ENCODE measurements at regions of chr11 and their contacts with region 1.

Region 1: GRCh38 chr11:61332797-61333549 is at the starts of genes DDB1 and TKFC:
- DNase-seq: peak; percentile 98
- ATAC-seq: peak; percentile 94
- H3K4me3 Mint-ChIP-seq: peak within 1 kb of the TSS; percentile 86
- H3K27ac Mint-ChIP-seq: peak within 1 kb of the TSS; percentile 96
- H3K4me1 Mint-ChIP-seq: peaks cover 66% of the 10 kb centered on the region
- H3K27me3 Mint-ChIP-seq: no peaks in the 10 kb centered on the region
- CTCF ChIP-seq: no peak
- total RNA-seq, gene DDB1: 269 to 270 TPM
- total RNA-seq, gene TKFC: 79.1 to 86.3 TPM

Region 2: DNA sequence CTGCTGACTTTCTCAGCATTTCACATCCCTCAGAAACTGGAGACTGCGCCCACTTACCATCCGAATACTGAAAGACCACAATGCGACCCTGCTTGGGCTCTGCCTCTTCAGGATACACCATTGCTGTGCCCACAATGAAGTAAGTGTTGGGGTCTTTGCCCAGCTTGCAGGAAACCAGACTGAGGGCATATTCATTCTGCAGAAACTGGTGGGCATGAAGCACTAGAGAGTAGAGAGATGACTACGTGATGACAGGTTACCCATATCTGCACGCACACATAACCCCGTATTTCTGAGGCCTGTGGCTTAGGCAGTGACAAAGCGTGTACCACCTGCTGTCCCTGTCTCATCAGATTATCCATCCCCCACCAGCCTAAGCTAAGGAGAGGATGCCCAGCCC is 23.2 kb before region 1 on chr11:
- CTCF ChIA-PET with region 1: interaction called, 10 read pairs
- POLR2A ChIA-PET with region 1: interaction called, 7 read pairs
- intact Hi-C with region 1: no loop called
- DNase-seq: peak; percentile 28
- ATAC-seq: peak; percentile 83
- H3K4me3 Mint-ChIP-seq: no peak overlapping the region
- H3K27ac Mint-ChIP-seq: peak overlapping the region; percentile 19
- H3K4me1 Mint-ChIP-seq: no peaks in the 10 kb centered on the region
- H3K27me3 Mint-ChIP-seq: no peaks in the 10 kb centered on the region
- CTCF ChIP-seq: no peak

Region 3: DNA sequence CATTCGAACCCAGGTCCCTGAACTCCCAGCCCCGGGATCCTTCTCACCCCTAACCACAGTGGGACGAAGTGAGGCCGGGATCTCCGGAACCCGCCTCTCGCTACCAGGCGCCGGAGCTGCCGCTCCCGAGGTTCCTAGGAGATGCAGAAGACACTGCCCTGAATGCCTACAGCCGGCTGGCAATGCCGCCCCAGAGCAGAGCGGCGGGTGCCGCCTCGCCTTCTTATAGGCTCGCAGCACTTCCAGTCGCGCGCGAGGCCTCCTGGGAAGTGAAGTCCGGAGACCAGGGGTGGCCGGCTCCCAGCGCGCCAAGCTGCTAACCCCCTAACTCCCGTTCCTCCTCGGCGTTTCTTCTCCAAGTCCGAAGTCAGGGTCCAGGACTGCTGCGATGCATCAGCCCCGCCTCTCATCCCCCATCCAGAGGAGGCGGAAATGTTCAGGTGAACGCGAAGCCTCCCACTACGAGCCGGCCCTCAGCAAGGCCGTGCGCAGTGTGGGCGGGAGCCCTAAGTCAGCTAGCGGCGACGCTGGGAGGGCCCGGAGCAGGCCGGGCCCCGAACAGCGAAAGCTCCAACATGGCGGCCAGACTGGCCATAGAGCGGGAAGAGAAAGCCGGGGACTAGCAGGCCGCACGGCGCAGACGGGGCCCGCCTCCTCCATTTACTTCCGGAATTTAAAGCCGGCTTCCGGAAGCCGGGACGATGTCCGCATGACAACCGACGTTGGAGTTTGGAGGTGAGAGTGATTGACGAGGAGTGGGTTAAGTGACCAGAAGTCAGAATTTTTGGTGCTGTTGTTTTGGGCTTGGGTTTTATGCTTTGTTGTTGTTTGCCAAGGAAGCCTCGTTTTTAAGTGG is 28.9 kb after region 1 on chr11 and contains the starts of genes CYB561A3 and TMEM138:
- CTCF ChIA-PET with region 1: interaction called, 181 read pairs
- POLR2A ChIA-PET with region 1: interaction called, 59 read pairs
- intact Hi-C with region 1: loop called (anchors 2 kb)
- DNase-seq: peak; percentile 96
- ATAC-seq: peak; percentile 96
- H3K4me3 Mint-ChIP-seq: peak within 1 kb of the TSS; percentile 99
- H3K27ac Mint-ChIP-seq: peak within 1 kb of the TSS; percentile 99
- H3K4me1 Mint-ChIP-seq: peaks cover 35% of the 10 kb centered on the region
- H3K27me3 Mint-ChIP-seq: no peaks in the 10 kb centered on the region
- CTCF ChIP-seq: no peak
- total RNA-seq, gene CYB561A3: 32.4 to 33.5 TPM
- total RNA-seq, gene TMEM138: 38.6 to 47.0 TPM

Region 4: GRCh38 chr11:61392981-61393595 is 60.1 kb after region 1 on chr11:
- CTCF ChIA-PET with region 1: interaction called, 101 read pairs
- POLR2A ChIA-PET with region 1: interaction called, 24 read pairs
- intact Hi-C with region 1: no loop called
- DNase-seq: peak; percentile 35
- ATAC-seq: peak; percentile 41
- H3K4me3 Mint-ChIP-seq: peak overlapping the region; percentile 80
- H3K27ac Mint-ChIP-seq: peak overlapping the region; percentile 88
- H3K4me1 Mint-ChIP-seq: peaks cover 24% of the 10 kb centered on the region
- H3K27me3 Mint-ChIP-seq: no peaks in the 10 kb centered on the region
- CTCF ChIP-seq: peak; percentile 28

Region 5: GRCh38 chr11:61429691-61430582 is 97.0 kb after region 1 on chr11 and contains the starts of genes CPSF7 and SDHAF2:
- CTCF ChIA-PET with region 1: interaction called, 54 read pairs
- POLR2A ChIA-PET with region 1: interaction called, 17 read pairs
- intact Hi-C with region 1: no loop called
- DNase-seq: peak; percentile 98
- ATAC-seq: peak; percentile 91
- H3K4me3 Mint-ChIP-seq: peak within 1 kb of the TSS; percentile 98
- H3K27ac Mint-ChIP-seq: peak within 1 kb of the TSS; percentile 99
- H3K4me1 Mint-ChIP-seq: peaks cover 57% of the 10 kb centered on the region
- H3K27me3 Mint-ChIP-seq: no peaks in the 10 kb centered on the region
- CTCF ChIP-seq: no peak
- total RNA-seq, gene CPSF7: 98.5 to 105 TPM
- total RNA-seq, gene SDHAF2: 33.6 to 35.3 TPM

Region 6: GRCh38 chr11:61446211-61446651 is 113.3 kb after region 1 on chr11:
- CTCF ChIA-PET with region 1: interaction called, 16 read pairs
- POLR2A ChIA-PET with region 1: no interaction called
- intact Hi-C with region 1: no loop called
- DNase-seq: peak; percentile 92
- ATAC-seq: peak; percentile 92
- H3K4me3 Mint-ChIP-seq: no peak overlapping the region
- H3K27ac Mint-ChIP-seq: peak overlapping the region; percentile 54
- H3K4me1 Mint-ChIP-seq: peaks cover 32% of the 10 kb centered on the region
- H3K27me3 Mint-ChIP-seq: no peaks in the 10 kb centered on the region
- CTCF ChIP-seq: peak; percentile 75